GM18951 (cell line): ENCODE measurements at regions of chr16 and their contacts with region 1.

Region 1: GRCh38 chr16:71840012-71840411 is 5.8 kb upstream of the ATXN1L start:
- POLR2A ChIP-seq: no peak

Region 2: GRCh38 chr16:71449020-71449419 is 391.0 kb before region 1 on chr16:
- in situ Hi-C with region 1: no loop called
- POLR2A ChIP-seq: no peak

Region 3: DNA sequence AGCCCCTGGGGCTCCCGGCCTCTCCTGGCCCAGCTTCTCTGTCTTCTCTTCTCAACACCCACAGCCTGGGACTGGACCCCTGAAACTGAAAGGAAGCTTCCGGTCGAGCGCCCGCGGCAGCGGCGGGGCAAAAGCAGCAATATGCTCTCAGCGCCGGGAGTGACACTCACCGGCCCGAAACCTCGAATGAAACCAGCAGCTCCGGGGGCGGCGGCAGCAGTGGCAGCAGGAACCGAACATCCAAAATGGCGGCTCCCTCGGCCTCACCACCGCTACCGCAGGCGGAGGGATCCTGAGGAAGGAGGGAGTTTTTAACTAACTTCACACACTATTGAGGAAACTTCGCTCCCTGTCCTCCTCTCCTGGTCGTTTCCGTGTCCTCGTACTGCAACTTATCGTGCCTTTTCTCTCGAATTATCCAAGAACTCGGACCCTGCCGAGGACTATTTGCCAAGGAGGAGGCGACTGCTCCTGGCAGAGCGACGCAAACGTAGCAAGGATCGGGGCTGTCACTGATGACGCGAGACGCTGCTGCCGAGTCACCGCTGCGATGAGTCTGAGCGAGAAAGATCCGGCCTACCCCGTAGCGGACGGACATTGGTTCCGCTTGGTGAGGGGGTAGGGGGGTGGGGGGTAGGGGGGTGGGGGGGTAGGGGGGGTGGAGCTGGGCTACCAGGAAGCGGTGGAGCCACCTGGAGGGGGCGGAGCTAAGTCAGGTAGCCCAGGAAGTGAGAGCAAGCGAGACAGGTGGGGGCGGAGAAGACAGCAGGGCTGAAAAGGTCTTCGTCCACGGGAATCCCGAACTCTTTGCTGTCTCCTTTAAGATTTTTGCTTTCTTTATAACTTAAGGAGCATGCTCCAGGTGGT is 31.2 kb before region 1 on chr16 and contains the start of gene AP1G1:
- in situ Hi-C with region 1: loop called (anchors 5 kb)
- POLR2A ChIP-seq: peak; percentile 87